K562 (cell line): ENCODE measurements at regions of chr1 and their contacts with region 1.

Region 1: GRCh38 chr1:10539411-10540043 is 64.8 kb downstream of the PEX14 start:
- DNase-seq: peak in 1 of 4 experiments; percentile 30
- ATAC-seq: peak; percentile 65
- H3K4me3 ChIP-seq: no peak overlapping the region
- H3K27ac ChIP-seq: no peak overlapping the region
- H3K4me1 ChIP-seq: peaks cover 8 to 12% of the 10 kb centered on the region in 2 experiments; a peak in 4 of 5 replicates
- H3K27me3 ChIP-seq: no peaks in the 10 kb centered on the region
- CTCF ChIP-seq: no peak
- EP300 ChIP-seq: no peak
- POLR2A ChIP-seq: no peak
- RAD21 ChIP-seq: no peak

Region 2: GRCh38 chr1:10549904-10550664 is 10.6 kb after region 1 on chr1:
- CTCF ChIA-PET with region 1: no interaction called
- POLR2A ChIA-PET with region 1: interaction called, 15 read pairs
- in situ Hi-C with region 1: no loop called
- intact Hi-C with region 1: no loop called
- DNase-seq: no peak
- ATAC-seq: no peak; the same call in 2 of the 3 replicates
- H3K4me3 ChIP-seq: no peak overlapping the region
- H3K27ac ChIP-seq: no peak overlapping the region
- H3K4me1 ChIP-seq: peaks cover 0 to 10% of the 10 kb centered on the region in 2 experiments; a peak in 3 of 5 replicates
- H3K27me3 ChIP-seq: no peaks in the 10 kb centered on the region
- CTCF ChIP-seq: no peak
- EP300 ChIP-seq: no peak
- POLR2A ChIP-seq: no peak
- RAD21 ChIP-seq: no peak